HepG2 (cell line): ENCODE measurements at regions of chr2 and their contacts with region 1.

Region 1: DNA sequence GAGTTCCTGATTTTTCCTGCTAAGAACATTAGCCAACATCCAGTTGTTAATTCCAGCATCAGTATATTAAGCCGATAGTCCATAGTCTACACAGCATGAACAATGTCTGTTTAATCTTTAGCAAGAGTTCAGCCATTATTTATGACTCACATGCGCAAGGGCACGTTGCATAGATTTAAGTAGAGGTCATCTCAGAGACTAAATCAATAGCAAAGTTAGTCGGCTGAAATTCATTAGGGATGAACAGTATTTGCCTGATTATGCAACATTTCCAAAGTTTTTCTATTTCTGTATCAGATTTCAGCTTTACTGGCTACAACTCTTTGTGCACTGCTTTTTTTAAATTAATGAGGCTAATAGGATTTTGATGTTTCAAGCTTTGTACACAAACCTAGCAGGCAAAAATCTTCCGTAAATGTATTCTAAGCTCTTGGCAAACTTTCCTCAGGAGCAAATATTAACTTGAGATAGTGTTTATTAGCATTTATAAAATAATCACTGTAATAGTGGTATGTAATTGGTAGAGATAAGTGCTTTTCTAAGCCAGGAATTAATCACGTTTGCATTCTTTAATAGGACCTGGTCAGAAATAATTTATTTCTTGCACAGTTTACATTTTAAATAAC is 578.7 kb upstream of the ID2 start:
- DNase-seq: peak; percentile 100
- ATAC-seq: peak; percentile 98
- H3K4me3 ChIP-seq: no peak overlapping the region; a peak in 1 of 6 replicates
- H3K27ac ChIP-seq: peak overlapping the region; percentile 65
- H3K4me1 ChIP-seq: peaks cover 63% of the 10 kb centered on the region
- H3K27me3 ChIP-seq: no peaks in the 10 kb centered on the region
- CTCF ChIP-seq: no peak
- EP300 ChIP-seq: peak; percentile 94 to 99
- POLR2A ChIP-seq: no peak
- RAD21 ChIP-seq: peak; percentile 44; the same call in 1 of the 2 replicates

Region 2: DNA sequence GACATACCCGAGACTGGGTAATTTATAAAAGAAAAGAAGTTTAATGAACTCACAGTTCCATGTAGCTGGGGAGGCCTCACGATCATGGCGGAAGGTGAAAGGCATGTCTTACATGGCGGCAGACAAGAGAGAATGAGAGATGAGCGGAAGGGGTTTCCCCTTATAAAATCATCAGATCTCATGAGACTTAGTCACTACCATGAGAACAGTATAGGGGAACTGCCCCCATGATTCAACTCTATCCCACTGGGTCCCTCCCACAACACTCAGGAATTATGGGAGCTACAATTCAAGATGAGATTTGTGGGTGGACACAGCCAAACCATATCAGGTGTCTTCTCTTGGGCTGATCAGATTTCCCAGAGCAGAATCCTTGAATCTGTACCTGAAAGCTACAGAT is 38.6 kb before region 1 on chr2:
- CTCF ChIA-PET with region 1: no interaction called
- POLR2A ChIA-PET with region 1: no interaction called
- in situ Hi-C with region 1: no loop called
- intact Hi-C with region 1: loop called (anchors 1 kb)
- DNase-seq: no peak
- ATAC-seq: no peak
- H3K4me3 ChIP-seq: no peak overlapping the region
- H3K27ac ChIP-seq: no peak overlapping the region
- H3K4me1 ChIP-seq: no peaks in the 10 kb centered on the region
- H3K27me3 ChIP-seq: no peaks in the 10 kb centered on the region
- CTCF ChIP-seq: no peak
- EP300 ChIP-seq: no peak
- POLR2A ChIP-seq: no peak
- RAD21 ChIP-seq: no peak

Region 3: DNA sequence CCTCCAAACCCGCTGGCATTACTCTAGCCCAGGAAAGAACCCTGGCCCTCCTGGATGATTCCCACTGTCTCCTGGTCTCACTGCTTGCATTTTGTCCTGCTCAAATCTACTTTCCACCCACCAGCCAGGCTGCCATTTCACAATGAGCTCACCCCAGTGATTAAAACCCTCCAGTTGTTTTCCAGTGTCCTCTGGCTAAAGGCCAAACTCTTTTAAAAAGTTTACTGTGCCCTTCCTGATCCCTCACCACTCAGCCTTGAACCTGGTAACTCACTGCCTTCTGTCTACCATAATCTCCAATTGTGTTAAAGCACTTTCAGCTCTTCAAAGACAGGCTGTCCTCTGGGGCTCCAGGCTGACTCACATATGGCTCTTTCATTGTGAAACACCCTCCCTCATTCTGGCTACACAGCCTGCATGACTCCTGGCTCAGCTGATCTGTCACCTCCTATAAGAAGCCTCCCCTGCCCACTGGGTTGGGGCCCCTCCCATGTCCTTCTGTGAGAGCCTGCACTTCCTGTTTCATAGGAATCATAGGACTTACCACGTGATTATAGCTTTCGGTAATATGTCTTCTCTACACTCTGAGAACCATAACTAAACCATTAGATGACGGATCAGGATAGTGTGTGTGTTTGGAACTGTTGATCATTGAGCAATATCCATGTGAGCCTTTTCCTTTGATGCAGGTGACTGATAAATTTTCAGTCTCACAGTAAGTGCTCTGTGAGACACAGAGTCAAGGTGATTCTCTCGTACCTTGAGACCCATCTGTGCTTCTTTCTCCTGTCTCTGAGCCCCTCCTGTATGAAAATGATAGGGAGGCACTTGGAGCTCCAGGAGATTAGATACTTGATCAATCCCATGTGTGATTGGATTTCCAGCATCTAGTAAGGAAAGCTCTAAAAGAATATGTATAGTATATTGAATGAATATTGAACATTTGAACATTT is 12.2 kb before region 1 on chr2:
- CTCF ChIA-PET with region 1: interaction called, 3 read pairs
- POLR2A ChIA-PET with region 1: interaction called, 14 read pairs
- in situ Hi-C with region 1: no loop called
- intact Hi-C with region 1: no loop called
- DNase-seq: peak; percentile 99
- ATAC-seq: peak; percentile 100
- H3K4me3 ChIP-seq: no peak overlapping the region
- H3K27ac ChIP-seq: peak overlapping the region; percentile 87
- H3K4me1 ChIP-seq: peaks cover 54% of the 10 kb centered on the region
- H3K27me3 ChIP-seq: no peaks in the 10 kb centered on the region
- CTCF ChIP-seq: no peak
- EP300 ChIP-seq: peak; percentile 80 to 92
- POLR2A ChIP-seq: peak; percentile 56 to 61; a peak in 3 of 4 replicates
- RAD21 ChIP-seq: peak; percentile 28

Region 4: GRCh38 chr2:8119782-8120505 is 16.7 kb after region 1 on chr2:
- CTCF ChIA-PET with region 1: no interaction called
- POLR2A ChIA-PET with region 1: interaction called, 13 read pairs
- in situ Hi-C with region 1: no loop called
- intact Hi-C with region 1: loop called (anchors 1 kb)
- DNase-seq: peak; percentile 99
- ATAC-seq: peak; percentile 93
- H3K4me3 ChIP-seq: peak overlapping the region; percentile 15 to 53 (median 25); a peak in 4 of 6 replicates
- H3K27ac ChIP-seq: peak overlapping the region; percentile 96
- H3K4me1 ChIP-seq: peaks cover 98% of the 10 kb centered on the region
- H3K27me3 ChIP-seq: no peaks in the 10 kb centered on the region
- CTCF ChIP-seq: no peak
- EP300 ChIP-seq: peak; percentile 32 to 97
- POLR2A ChIP-seq: peak; percentile 64 to 84
- RAD21 ChIP-seq: no peak

Region 5: DNA sequence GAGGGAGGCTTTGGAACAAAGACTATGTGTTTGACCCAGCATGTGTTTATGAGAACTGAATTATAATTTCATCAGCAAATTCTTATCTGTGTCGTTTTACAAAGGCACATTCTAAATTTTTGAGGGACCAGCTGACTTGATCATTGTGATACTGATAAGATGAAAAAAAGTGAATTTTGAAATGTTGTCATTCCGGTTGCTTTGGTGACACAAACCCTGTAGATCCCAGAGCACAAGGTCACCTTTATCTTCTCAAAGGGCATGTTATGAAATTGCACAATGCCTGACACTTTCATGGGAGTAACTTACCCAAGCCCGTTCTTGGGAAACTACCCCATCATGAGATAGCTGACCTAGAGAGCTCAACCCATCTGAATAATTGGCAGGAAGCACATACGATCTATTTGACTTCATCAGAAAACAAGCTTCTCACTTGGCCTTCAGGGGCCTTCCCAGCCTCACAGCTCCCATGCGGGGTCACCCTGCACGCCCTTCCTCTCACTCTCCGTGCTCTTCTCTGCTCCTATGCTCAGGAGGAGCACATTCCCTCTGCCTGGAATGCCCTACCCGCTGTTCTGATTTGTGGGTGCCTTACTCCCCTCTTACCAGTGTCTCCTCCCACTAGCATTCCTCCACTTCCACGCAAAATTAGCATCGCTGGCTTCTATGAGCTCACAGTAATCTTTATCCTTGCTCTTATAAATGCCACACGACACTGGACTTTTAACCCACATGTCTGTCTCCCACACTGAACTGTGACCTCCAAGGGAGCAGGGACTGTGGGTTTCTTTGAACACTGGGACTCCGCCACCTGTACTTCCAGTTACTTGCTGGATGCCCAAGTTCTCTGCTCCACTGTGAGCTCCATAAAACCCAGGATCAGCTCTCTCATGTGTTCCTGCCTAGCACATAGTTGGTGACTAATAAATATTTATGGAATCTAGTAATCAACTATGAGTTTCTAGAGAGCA is 22.8 kb after region 1 on chr2:
- CTCF ChIA-PET with region 1: no interaction called
- POLR2A ChIA-PET with region 1: interaction called, 8 read pairs
- in situ Hi-C with region 1: no loop called
- intact Hi-C with region 1: loop called (anchors 1 kb)
- DNase-seq: peak; percentile 100
- ATAC-seq: peak; percentile 92
- H3K4me3 ChIP-seq: peak overlapping the region in 2 of 3 experiments; percentile 12 to 60; a peak in 2 of 6 replicates
- H3K27ac ChIP-seq: peak overlapping the region; percentile 100
- H3K4me1 ChIP-seq: peaks cover 67% of the 10 kb centered on the region
- H3K27me3 ChIP-seq: no peaks in the 10 kb centered on the region
- CTCF ChIP-seq: peak; percentile 36
- EP300 ChIP-seq: peak; percentile 100
- POLR2A ChIP-seq: peak; percentile 70 to 94
- RAD21 ChIP-seq: peak; percentile 25; the same call in 1 of the 2 replicates

Region 6: GRCh38 chr2:8303322-8303832 is 200.2 kb after region 1 on chr2:
- CTCF ChIA-PET with region 1: no interaction called
- POLR2A ChIA-PET with region 1: no interaction called
- in situ Hi-C with region 1: no loop called
- intact Hi-C with region 1: no loop called
- DNase-seq: no peak
- ATAC-seq: no peak
- H3K4me3 ChIP-seq: no peak overlapping the region
- H3K27ac ChIP-seq: no peak overlapping the region
- H3K4me1 ChIP-seq: no peaks in the 10 kb centered on the region
- H3K27me3 ChIP-seq: peaks cover 1 to 18% of the 10 kb centered on the region in 2 experiments; a peak in 2 of 5 replicates
- CTCF ChIP-seq: no peak
- EP300 ChIP-seq: no peak
- POLR2A ChIP-seq: no peak
- RAD21 ChIP-seq: no peak

Region 7: GRCh38 chr2:8412586-8412985 is 309.4 kb after region 1 on chr2:
- CTCF ChIA-PET with region 1: no interaction called
- POLR2A ChIA-PET with region 1: no interaction called
- in situ Hi-C with region 1: no loop called
- intact Hi-C with region 1: loop called (anchors 1 kb)
- DNase-seq: no peak
- ATAC-seq: no peak; the same call in 2 of the 3 replicates
- H3K4me3 ChIP-seq: no peak overlapping the region
- H3K27ac ChIP-seq: peak overlapping the region; percentile 80
- H3K4me1 ChIP-seq: peaks cover 72% of the 10 kb centered on the region
- H3K27me3 ChIP-seq: no peaks in the 10 kb centered on the region; a peak in 1 of 5 replicates
- CTCF ChIP-seq: no peak
- EP300 ChIP-seq: no peak
- POLR2A ChIP-seq: no peak
- RAD21 ChIP-seq: no peak